ENCODE measurements at regions of chr10 and their contacts with region 1.

Region 1: DNA sequence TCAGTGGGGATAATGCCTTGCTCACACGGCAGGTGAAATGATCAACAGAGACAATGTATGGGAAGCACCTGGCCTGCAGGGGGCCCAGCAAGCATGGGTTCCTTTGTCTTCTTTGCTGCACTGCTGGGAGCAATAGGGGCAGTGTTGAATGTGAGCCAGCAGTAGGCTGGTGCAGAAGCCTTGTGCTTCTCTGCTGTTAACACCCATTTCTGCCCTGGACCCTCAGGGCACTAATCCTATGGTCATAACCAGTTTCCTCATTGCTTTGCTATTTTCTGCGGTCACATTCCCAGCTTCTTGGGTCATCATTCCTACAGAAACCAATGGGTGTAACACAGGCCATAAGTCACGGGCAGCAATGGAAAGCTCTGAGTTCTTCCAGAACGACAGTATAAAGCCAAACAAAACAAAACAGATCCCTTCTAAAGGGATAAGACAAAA is 10.9 kb upstream of the LGI1 start:
- DNase-seq: peak; percentile 70
- ATAC-seq: peak; percentile 66
- H3K4me3 Mint-ChIP-seq: no peak overlapping the region
- H3K27ac Mint-ChIP-seq: no peak overlapping the region
- H3K4me1 Mint-ChIP-seq: peaks cover 51% of the 10 kb centered on the region
- H3K27me3 Mint-ChIP-seq: no peaks in the 10 kb centered on the region; the same call in 1 of the 2 replicates
- CTCF ChIP-seq: peak; percentile 42; the same call in 1 of the 2 replicates

Region 2: DNA sequence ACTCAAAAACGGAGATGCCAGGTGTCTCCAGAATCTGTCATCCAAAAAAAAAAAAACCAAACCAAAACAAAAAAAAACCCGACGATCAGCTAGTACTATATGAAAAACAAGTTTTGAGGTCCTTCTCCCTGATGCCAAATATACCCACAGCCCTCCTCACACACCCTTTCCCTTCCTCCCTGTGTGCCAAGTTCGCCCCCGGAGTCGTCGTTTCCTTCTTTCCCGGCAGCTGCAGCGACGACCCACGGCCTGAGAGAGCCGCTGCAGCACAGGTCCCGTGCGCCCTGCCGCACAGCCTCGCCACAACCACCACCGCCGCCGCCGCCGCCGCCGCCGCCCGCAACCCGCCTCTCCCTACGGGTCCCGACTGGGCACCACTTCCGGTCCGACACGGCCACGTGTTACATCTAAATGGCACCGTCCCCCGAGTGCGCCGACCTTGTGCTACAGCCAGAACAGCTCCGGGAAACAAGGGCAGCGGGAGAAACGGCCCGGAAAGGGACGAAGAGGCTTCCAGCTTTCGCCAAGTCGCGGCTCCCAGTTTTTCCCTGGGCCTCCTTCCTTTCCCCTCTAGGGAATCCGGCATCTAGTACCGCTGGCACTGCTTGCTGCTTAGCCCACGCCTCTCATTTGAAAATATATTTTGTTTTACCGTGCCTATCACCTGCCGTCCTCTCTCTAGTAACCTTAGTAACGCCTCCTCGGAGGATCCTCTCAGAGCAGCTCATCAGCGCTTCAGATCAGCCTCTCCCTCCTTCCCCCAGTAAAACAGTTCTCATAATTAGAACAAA is 44.5 kb before region 1 on chr10 and contains the start of gene FRA10AC1:
- CTCF ChIA-PET with region 1: interaction called, 38 read pairs
- POLR2A ChIA-PET with region 1: no interaction called
- DNase-seq: peak; percentile 90
- ATAC-seq: peak; percentile 94
- H3K4me3 Mint-ChIP-seq: no peak within 1 kb of the TSS
- H3K27ac Mint-ChIP-seq: no peak within 1 kb of the TSS
- H3K4me1 Mint-ChIP-seq: peaks cover 14% of the 10 kb centered on the region
- H3K27me3 Mint-ChIP-seq: peaks cover under 1% of the 10 kb centered on the region
- CTCF ChIP-seq: no peak
- total RNA-seq, gene FRA10AC1: 12.9 to 15.8 TPM (median 14.1 TPM) in 3 replicates

Region 3: GRCh38 chr10:93757136-93757535 is 10.3 kb after region 1 on chr10:
- CTCF ChIA-PET with region 1: interaction called, 19 read pairs
- POLR2A ChIA-PET with region 1: no interaction called
- DNase-seq: peak; percentile 29
- ATAC-seq: peak; percentile 60
- H3K4me3 Mint-ChIP-seq: no peak overlapping the region
- H3K27ac Mint-ChIP-seq: no peak overlapping the region; the same call in 1 of the 2 replicates
- H3K4me1 Mint-ChIP-seq: peaks cover 63% of the 10 kb centered on the region
- H3K27me3 Mint-ChIP-seq: peaks cover 28% of the 10 kb centered on the region
- CTCF ChIP-seq: no peak

Region 4: GRCh38 chr10:93773120-93773519 is 26.3 kb after region 1 on chr10:
- CTCF ChIA-PET with region 1: interaction called, 20 read pairs
- POLR2A ChIA-PET with region 1: no interaction called
- DNase-seq: no peak
- ATAC-seq: no peak
- H3K4me3 Mint-ChIP-seq: no peak overlapping the region
- H3K27ac Mint-ChIP-seq: no peak overlapping the region
- H3K4me1 Mint-ChIP-seq: peaks cover 26% of the 10 kb centered on the region
- H3K27me3 Mint-ChIP-seq: no peaks in the 10 kb centered on the region; the same call in 1 of the 2 replicates
- CTCF ChIP-seq: no peak

Region 5: DNA sequence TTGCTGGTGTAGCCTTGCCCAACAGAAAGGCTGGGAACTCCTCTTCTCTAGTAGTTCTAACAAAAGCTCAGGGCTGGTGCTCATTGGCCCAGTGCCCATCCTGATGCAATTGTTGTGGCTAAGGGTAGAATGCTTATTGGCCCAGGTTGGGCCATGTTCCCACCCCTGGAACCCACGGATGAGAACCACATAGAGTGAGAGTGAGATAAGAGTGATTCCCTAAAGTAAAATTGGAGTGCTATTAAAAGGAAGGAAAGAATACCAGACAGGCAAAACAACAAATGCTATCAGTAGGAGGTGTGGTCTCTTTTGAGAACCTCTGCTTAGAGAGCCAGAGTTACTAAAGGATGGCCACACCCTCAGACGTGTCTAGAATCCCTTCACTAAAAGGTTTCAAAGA is 60.0 kb after region 1 on chr10:
- CTCF ChIA-PET with region 1: interaction called, 425 read pairs
- POLR2A ChIA-PET with region 1: no interaction called
- DNase-seq: no peak
- ATAC-seq: peak; percentile 36; the same call in 1 of the 2 replicates
- H3K4me3 Mint-ChIP-seq: no peak overlapping the region
- H3K27ac Mint-ChIP-seq: no peak overlapping the region
- H3K4me1 Mint-ChIP-seq: peaks cover 9% of the 10 kb centered on the region
- H3K27me3 Mint-ChIP-seq: peaks cover 2% of the 10 kb centered on the region
- CTCF ChIP-seq: no peak

Region 6: GRCh38 chr10:93859049-93859655 is 112.3 kb after region 1 on chr10:
- CTCF ChIA-PET with region 1: interaction called, 13 read pairs
- POLR2A ChIA-PET with region 1: no interaction called
- DNase-seq: no peak
- ATAC-seq: no peak
- H3K4me3 Mint-ChIP-seq: no peak overlapping the region
- H3K27ac Mint-ChIP-seq: no peak overlapping the region
- H3K4me1 Mint-ChIP-seq: 0 out of 2 replicates have a peak, but pooled peaks cover 2% of the 10 kb centered on the region
- H3K27me3 Mint-ChIP-seq: peaks cover 82% of the 10 kb centered on the region
- CTCF ChIP-seq: peak; percentile 13; the same call in 1 of the 2 replicates